B cell (primary cell): ENCODE measurements at regions of chr15 and their contacts with region 1.

Region 1: GRCh38 chr15:92797168-92797951 is 102.8 kb upstream of the CHD2 start:
- DNase-seq: peak; percentile 87
- ATAC-seq: peak; percentile 78
- H3K4me3 ChIP-seq: no peak overlapping the region
- H3K4me3 Mint-ChIP-seq: no peak overlapping the region
- H3K27ac ChIP-seq: no peak overlapping the region
- H3K27ac Mint-ChIP-seq: peak overlapping the region; percentile 54
- H3K4me1 ChIP-seq: peaks cover 4% of the 10 kb centered on the region in 2 donors
- H3K4me1 Mint-ChIP-seq: peaks cover 3% of the 10 kb centered on the region
- H3K27me3 ChIP-seq: no peaks in the 10 kb centered on the region
- H3K27me3 Mint-ChIP-seq: no peaks in the 10 kb centered on the region
- CTCF ChIP-seq: peak; percentile 79

Region 2: GRCh38 chr15:92571824-92572223 is 225.5 kb before region 1 on chr15:
- CTCF ChIA-PET with region 1: no interaction called
- POLR2A ChIA-PET with region 1: no interaction called
- intact Hi-C with region 1: no loop called
- DNase-seq: no peak
- ATAC-seq: no peak
- H3K4me3 ChIP-seq: no peak overlapping the region
- H3K4me3 Mint-ChIP-seq: no peak overlapping the region
- H3K27ac ChIP-seq: no peak overlapping the region
- H3K27ac Mint-ChIP-seq: no peak overlapping the region
- H3K4me1 ChIP-seq: no peaks in the 10 kb centered on the region
- H3K4me1 Mint-ChIP-seq: no peaks in the 10 kb centered on the region
- H3K27me3 ChIP-seq: no peaks in the 10 kb centered on the region
- H3K27me3 Mint-ChIP-seq: no peaks in the 10 kb centered on the region
- CTCF ChIP-seq: no peak

Region 3: DNA sequence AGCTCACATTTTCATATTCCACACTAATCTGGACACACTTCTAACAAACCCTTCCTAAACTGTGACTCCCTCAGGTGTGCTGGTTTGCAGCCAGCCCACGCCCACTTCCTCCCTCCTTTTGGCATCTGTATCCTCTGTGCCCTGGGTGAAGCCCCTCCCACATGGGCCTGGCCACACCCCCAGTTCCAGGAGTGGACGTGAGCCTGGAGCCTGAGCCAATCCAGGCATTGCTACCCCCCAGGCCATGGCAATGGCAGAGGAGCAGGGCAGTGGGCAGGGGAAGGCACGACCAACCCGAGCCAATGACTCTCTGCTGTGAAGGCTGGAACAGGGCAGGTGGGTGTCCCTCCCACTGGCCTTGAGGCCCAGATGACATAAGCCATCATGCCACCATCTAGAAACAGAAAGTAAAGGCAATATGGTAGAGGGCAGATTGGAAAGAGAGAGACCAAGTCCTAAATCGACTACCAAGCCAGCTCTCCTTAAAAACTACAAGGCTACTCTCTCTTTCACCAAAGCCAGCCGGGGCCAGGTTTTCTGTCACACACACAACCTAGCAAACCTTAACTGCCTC is 160.4 kb before region 1 on chr15:
- CTCF ChIA-PET with region 1: no interaction called
- POLR2A ChIA-PET with region 1: no interaction called
- intact Hi-C with region 1: no loop called
- DNase-seq: no peak
- ATAC-seq: no peak
- H3K4me3 ChIP-seq: no peak overlapping the region
- H3K4me3 Mint-ChIP-seq: no peak overlapping the region
- H3K27ac ChIP-seq: no peak overlapping the region
- H3K27ac Mint-ChIP-seq: no peak overlapping the region
- H3K4me1 ChIP-seq: no peaks in the 10 kb centered on the region
- H3K4me1 Mint-ChIP-seq: no peaks in the 10 kb centered on the region
- H3K27me3 ChIP-seq: no peaks in the 10 kb centered on the region
- H3K27me3 Mint-ChIP-seq: peaks cover 17% of the 10 kb centered on the region
- CTCF ChIP-seq: no peak

Region 4: GRCh38 chr15:92714477-92715401 is 82.6 kb before region 1 on chr15:
- CTCF ChIA-PET with region 1: no interaction called
- POLR2A ChIA-PET with region 1: no interaction called
- intact Hi-C with region 1: no loop called
- DNase-seq: peak; percentile 79
- ATAC-seq: peak; percentile 73
- H3K4me3 ChIP-seq: peak overlapping the region; percentile 30 to 71 (median 47)
- H3K4me3 Mint-ChIP-seq: peak overlapping the region; percentile 83
- H3K27ac ChIP-seq: no peak overlapping the region
- H3K27ac Mint-ChIP-seq: no peak overlapping the region
- H3K4me1 ChIP-seq: peaks cover 11 to 12% of the 10 kb centered on the region in 2 donors
- H3K4me1 Mint-ChIP-seq: peaks cover 11% of the 10 kb centered on the region
- H3K27me3 ChIP-seq: peaks cover 0 to 23% (median 10%) of the 10 kb centered on the region in 4 experiments
- H3K27me3 Mint-ChIP-seq: peaks cover 42% of the 10 kb centered on the region
- CTCF ChIP-seq: peak; percentile 95

Region 5: DNA sequence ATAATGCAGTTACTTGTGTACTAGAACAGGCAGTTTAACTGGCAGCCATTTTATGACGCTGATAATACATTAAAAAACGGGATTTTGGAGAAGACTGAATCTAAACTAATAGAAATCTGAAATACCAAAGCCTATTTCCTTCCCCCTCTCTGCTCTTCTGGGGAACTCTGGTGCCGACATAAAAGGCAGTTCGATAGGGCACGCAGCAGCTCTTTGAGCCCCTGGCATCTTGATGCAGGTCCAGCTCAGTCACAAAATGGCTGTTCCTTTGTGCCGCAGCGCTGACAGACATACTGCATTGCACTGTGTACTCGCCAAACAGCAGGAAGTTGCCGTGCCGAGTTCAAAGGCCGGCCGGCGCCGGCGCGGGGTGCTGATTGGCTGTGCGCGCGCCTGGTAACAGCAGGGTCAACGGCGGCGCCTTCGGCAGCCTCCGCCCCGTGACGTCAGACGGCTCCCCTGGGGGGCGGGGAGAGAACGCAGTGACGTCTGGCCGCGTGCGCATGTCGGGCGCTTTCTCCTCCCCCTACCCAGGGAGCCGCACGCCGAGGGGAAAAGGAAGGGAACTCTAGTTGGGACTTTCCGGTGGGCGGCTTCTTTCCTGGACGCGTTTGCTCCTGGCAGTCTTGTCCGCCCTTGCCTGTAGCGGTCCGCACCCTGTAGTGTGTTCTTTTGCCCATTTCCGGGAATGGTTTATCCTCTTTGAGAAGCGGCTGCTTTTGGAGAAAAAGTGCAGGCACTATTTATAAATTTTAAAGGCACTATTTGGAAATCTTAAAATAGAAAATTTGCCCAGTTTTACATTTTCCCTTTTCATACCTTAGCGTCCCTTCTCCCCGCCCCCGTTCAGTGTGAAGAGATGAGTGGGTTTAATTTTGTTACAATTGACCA is 106.8 kb after region 1 on chr15:
- CTCF ChIA-PET with region 1: interaction called, 21 read pairs
- POLR2A ChIA-PET with region 1: interaction called, 3 read pairs
- intact Hi-C with region 1: no loop called
- DNase-seq: peak; percentile 99
- ATAC-seq: peak; percentile 82
- H3K4me3 ChIP-seq: peak overlapping the region; percentile 64 to 100 (median 85)
- H3K4me3 Mint-ChIP-seq: peak overlapping the region; percentile 92
- H3K27ac ChIP-seq: peak overlapping the region; percentile 95 to 97
- H3K27ac Mint-ChIP-seq: peak overlapping the region; percentile 100
- H3K4me1 ChIP-seq: peaks cover 48 to 57% of the 10 kb centered on the region in 2 donors
- H3K4me1 Mint-ChIP-seq: peaks cover 64% of the 10 kb centered on the region
- H3K27me3 ChIP-seq: no peaks in the 10 kb centered on the region
- H3K27me3 Mint-ChIP-seq: no peaks in the 10 kb centered on the region
- CTCF ChIP-seq: no peak

Region 6: GRCh38 chr15:92930776-92931175 is 133.4 kb after region 1 on chr15:
- CTCF ChIA-PET with region 1: interaction called, 81 read pairs
- POLR2A ChIA-PET with region 1: interaction called, 3 read pairs
- intact Hi-C with region 1: no loop called
- DNase-seq: no peak
- ATAC-seq: no peak
- H3K4me3 ChIP-seq: no peak overlapping the region
- H3K4me3 Mint-ChIP-seq: no peak overlapping the region
- H3K27ac ChIP-seq: peak overlapping the region in 1 of 2 donors; percentile 5
- H3K27ac Mint-ChIP-seq: peak overlapping the region; percentile 51
- H3K4me1 ChIP-seq: no peaks in the 10 kb centered on the region
- H3K4me1 Mint-ChIP-seq: peaks cover 10% of the 10 kb centered on the region
- H3K27me3 ChIP-seq: no peaks in the 10 kb centered on the region
- H3K27me3 Mint-ChIP-seq: no peaks in the 10 kb centered on the region
- CTCF ChIP-seq: no peak

Region 7: GRCh38 chr15:92954578-92954977 is 157.2 kb after region 1 on chr15:
- CTCF ChIA-PET with region 1: interaction called, 19 read pairs
- POLR2A ChIA-PET with region 1: no interaction called
- intact Hi-C with region 1: no loop called
- DNase-seq: no peak
- ATAC-seq: no peak
- H3K4me3 ChIP-seq: no peak overlapping the region
- H3K4me3 Mint-ChIP-seq: no peak overlapping the region
- H3K27ac ChIP-seq: no peak overlapping the region
- H3K27ac Mint-ChIP-seq: no peak overlapping the region
- H3K4me1 ChIP-seq: no peaks in the 10 kb centered on the region
- H3K4me1 Mint-ChIP-seq: peaks cover 11% of the 10 kb centered on the region
- H3K27me3 ChIP-seq: no peaks in the 10 kb centered on the region
- H3K27me3 Mint-ChIP-seq: no peaks in the 10 kb centered on the region
- CTCF ChIP-seq: peak; percentile 36

Region 8: DNA sequence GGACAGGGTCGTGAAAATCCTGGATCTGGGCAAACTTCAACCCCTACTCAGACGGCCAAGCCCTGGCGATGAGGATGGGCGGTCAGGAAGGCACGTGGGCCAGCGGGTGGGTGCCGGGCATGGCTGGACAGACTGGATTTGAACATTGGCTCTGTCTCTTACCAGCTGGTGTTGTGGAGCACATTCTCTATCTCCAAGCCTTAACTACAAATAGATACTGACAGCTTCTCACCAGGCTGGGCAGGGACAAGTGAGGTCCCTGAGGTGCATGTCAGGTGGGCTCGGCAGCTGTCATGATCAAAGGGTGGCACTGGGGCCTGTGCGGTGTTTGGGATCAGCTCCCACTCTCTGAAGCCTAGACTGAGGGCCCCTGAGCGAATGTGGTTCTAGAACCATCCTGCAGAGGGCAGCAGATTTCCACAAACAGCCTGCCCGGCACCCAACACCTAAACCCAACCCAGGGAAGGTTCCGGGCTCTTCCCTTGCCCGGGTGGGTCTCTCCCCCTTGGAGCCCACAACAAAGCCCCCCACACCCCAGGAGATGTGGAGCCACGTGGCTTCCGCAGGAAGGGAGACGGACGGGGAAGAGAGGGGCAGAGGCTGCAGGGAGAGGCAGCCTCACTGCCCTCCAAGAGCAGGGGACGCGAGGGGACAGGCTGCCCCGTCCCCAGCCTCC is 233.2 kb after region 1 on chr15:
- CTCF ChIA-PET with region 1: interaction called, 16 read pairs
- POLR2A ChIA-PET with region 1: no interaction called
- intact Hi-C with region 1: loop called (anchors 1 kb)
- DNase-seq: peak; percentile 72
- ATAC-seq: peak; percentile 82
- H3K4me3 ChIP-seq: no peak overlapping the region
- H3K4me3 Mint-ChIP-seq: no peak overlapping the region
- H3K27ac ChIP-seq: no peak overlapping the region
- H3K27ac Mint-ChIP-seq: peak overlapping the region; percentile 43
- H3K4me1 ChIP-seq: peaks cover under 1 to 10% of the 10 kb centered on the region in 2 donors
- H3K4me1 Mint-ChIP-seq: peaks cover 18% of the 10 kb centered on the region
- H3K27me3 ChIP-seq: no peaks in the 10 kb centered on the region
- H3K27me3 Mint-ChIP-seq: no peaks in the 10 kb centered on the region
- CTCF ChIP-seq: peak; percentile 84